ENCODE measurements at regions of chr19 and their contacts with region 1.

Region 1: GRCh38 chr19:16778796-16779411 is 50.3 kb upstream of the SIN3B start:
- DNase-seq: peak; percentile 26 to 70
- ATAC-seq: peak; percentile 68 to 81 (median 76)
- H3K4me3 ChIP-seq: no peak overlapping the region
- H3K4me3 Mint-ChIP-seq: no peak overlapping the region
- H3K27ac ChIP-seq: no peak overlapping the region
- H3K27ac Mint-ChIP-seq: no peak overlapping the region
- H3K4me1 ChIP-seq: no peaks in the 10 kb centered on the region
- H3K4me1 Mint-ChIP-seq: no peaks in the 10 kb centered on the region
- H3K27me3 ChIP-seq: no peaks in the 10 kb centered on the region
- H3K27me3 Mint-ChIP-seq: peaks cover 0 to 20% of the 10 kb centered on the region in 2 donors
- CTCF ChIP-seq: peak; percentile 32

Region 2: GRCh38 chr19:16795721-16796120 is 16.8 kb after region 1 on chr19:
- intact Hi-C with region 1: no loop called
- DNase-seq: no peak
- ATAC-seq: no peak
- H3K4me3 ChIP-seq: no peak overlapping the region
- H3K4me3 Mint-ChIP-seq: no peak overlapping the region
- H3K27ac ChIP-seq: no peak overlapping the region
- H3K27ac Mint-ChIP-seq: no peak overlapping the region
- H3K4me1 ChIP-seq: no peaks in the 10 kb centered on the region
- H3K4me1 Mint-ChIP-seq: no peaks in the 10 kb centered on the region
- H3K27me3 ChIP-seq: no peaks in the 10 kb centered on the region
- H3K27me3 Mint-ChIP-seq: no peaks in the 10 kb centered on the region
- CTCF ChIP-seq: no peak

Region 3: DNA sequence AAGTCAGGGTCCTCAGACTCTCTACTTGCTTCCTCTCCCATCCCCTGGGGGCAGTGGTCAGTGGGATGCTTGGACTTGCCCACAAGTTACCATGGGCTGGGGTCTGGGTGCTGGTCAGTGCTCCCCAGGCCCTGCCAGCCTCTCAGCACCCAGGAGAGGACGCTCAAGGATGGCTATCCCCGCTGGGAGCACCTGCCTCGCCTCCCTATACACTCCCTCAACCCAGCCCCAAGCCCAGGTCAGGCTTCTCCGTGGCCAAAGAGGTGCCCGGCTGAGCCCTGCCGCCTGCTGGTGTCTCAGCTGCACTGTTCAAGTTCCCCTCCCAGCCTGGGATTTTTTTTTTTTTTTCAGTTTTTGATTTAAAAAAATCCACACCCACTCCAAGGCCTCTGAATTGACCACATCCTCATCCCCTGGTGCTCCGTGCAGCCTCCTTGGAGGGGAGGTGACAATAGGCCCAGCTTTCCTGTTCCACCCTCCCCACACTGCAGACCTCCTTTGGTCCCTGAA is 120.7 kb after region 1 on chr19:
- intact Hi-C with region 1: loop called (anchors 2 kb)
- DNase-seq: peak in 1 of 2 donors; percentile 45
- ATAC-seq: peak in 1 of 3 donors; percentile 22
- H3K4me3 ChIP-seq: no peak overlapping the region
- H3K4me3 Mint-ChIP-seq: peak overlapping the region; percentile 47
- H3K27ac ChIP-seq: no peak overlapping the region
- H3K27ac Mint-ChIP-seq: peak overlapping the region; percentile 43 to 66
- H3K4me1 ChIP-seq: peaks cover 41% of the 10 kb centered on the region
- H3K4me1 Mint-ChIP-seq: peaks cover 14 to 23% of the 10 kb centered on the region in 2 donors
- H3K27me3 ChIP-seq: peaks cover under 1% of the 10 kb centered on the region
- H3K27me3 Mint-ChIP-seq: no peaks in the 10 kb centered on the region
- CTCF ChIP-seq: peak; percentile 39